Colonic mucosa (tissue), 4 donors: ENCODE measurements at regions of chr12 and their contacts with region 1.

Region 1: GRCh38 chr12:25677232-25677937 is 124.3 kb upstream of the LMNTD1 start:
- DNase-seq: no peak
- H3K4me3 ChIP-seq: no peak overlapping the region
- H3K27ac ChIP-seq: no peak overlapping the region
- H3K4me1 ChIP-seq: no peaks in the 10 kb centered on the region
- H3K27me3 ChIP-seq: no peaks in the 10 kb centered on the region
- CTCF ChIP-seq: no peak

Region 2: DNA sequence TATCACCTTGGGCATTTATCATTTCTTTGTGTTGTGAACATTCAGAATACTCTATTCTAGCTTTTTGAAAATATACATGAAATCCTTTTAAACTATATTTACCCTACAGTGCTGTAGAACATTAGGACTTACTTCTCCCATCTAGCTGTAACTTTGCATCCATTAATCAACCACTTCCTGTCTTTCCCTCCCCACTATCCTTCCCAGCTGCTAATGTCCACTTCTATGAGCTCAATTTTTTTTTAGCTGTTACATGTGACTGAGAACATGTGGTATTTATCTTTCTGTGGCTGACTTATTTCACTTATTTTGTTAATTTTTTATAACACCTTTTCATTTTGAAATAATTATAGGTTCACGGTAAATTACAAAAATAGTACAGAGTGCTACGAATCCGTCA is 260.3 kb before region 1 on chr12:
- intact Hi-C with region 1: no loop called
- DNase-seq: no peak
- H3K4me3 ChIP-seq: no peak overlapping the region
- H3K27ac ChIP-seq: no peak overlapping the region
- H3K4me1 ChIP-seq: no peaks in the 10 kb centered on the region
- H3K27me3 ChIP-seq: no peaks in the 10 kb centered on the region
- CTCF ChIP-seq: no peak

Region 3: GRCh38 chr12:25852791-25853190 is 175.4 kb after region 1 on chr12:
- intact Hi-C with region 1: no loop called
- DNase-seq: no peak
- H3K4me3 ChIP-seq: no peak overlapping the region
- H3K27ac ChIP-seq: no peak overlapping the region
- H3K4me1 ChIP-seq: no peaks in the 10 kb centered on the region
- H3K27me3 ChIP-seq: no peaks in the 10 kb centered on the region
- CTCF ChIP-seq: no peak

Region 4: DNA sequence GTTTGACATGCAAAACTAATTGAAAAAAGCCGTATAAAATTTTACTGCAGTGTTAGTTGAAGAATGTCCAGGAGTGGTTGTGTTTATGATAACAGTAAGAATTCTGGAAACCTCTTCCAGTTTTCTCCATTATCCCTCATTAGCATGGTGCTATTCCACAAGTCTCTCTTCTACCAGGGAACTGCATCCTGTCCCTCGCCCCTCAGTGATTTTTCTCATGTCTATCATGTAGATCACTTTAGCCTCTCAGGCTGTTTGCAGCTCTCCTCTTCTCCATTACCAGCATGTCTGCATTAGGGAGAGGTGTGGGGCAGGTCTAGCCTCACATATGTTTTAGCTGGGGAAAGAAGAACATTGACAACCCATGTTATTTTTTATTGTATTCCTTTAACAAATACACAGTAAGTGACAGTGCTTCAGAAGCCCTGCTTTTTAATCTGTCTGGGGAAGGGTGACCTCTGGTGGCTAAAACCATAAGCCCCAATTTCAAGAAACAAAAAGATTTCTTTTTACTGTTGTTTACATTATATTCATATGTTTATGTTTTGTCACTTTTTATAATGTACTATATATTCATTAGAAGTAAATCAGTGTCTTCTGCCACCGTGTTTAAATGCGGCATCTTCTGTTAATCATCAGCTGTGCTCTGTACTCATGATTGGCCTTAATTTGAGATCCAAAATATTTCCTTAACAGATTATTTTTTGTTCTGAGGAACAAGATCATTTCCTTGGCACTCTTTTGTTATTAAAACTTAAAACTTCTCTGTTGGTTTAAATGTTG is 351.8 kb after region 1 on chr12:
- intact Hi-C with region 1: loop called (anchors 10 kb)
- DNase-seq: peak; percentile 31
- H3K4me3 ChIP-seq: no peak overlapping the region
- H3K27ac ChIP-seq: no peak overlapping the region
- H3K4me1 ChIP-seq: no peaks in the 10 kb centered on the region
- H3K27me3 ChIP-seq: no peaks in the 10 kb centered on the region
- CTCF ChIP-seq: peak; percentile 65